ENCODE measurements at regions of chr13 and their contacts with region 1.

Region 1: DNA sequence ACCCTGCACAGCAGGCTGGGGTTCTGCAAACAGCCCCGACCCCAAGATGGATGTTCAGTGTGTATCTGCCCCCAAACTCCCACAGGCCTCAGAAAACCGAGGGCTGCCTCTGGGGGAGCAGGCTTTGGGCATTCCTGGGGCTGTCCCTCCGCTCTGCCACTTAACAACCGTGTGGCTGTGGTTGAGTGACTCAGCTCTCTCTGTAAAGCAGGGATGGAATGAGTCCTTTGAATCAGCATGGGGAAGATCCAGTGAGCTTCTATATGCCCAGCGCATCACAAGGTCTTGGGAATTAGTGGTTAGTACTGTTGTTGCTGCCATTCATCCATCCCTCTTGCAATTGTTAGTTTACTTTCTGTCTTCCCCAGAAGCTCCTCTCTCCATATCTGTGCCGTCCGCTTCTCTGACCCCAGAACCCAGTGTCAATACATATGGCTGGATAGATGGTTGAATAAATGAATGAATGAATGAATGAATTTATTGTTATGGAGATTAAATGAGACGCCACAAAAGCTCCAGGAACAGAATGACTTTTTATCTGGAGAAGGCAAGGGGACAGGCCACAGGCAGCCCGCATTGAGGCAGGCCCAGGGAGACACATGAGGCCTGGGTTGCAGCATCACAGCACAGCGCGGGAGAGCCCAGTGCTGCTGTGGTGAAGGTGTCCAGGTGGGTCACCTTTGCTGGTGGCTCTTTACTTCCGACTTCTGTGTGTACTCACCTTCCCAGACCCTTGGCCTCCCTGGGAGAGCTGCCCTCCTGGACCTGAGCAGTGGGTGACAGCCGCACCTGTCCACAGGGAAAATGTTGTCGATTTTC is 89.2 kb downstream of the RGCC start:
- DNase-seq: no peak
- ATAC-seq: no peak
- H3K4me3 ChIP-seq: no peak overlapping the region
- H3K27ac ChIP-seq: peak overlapping the region in 11 of 12 donors; percentile 62 to 90 (median 82)
- H3K4me1 ChIP-seq: peaks cover 3 to 25% (median 16%) of the 10 kb centered on the region in 12 donors
- H3K27me3 ChIP-seq: no peaks in the 10 kb centered on the region
- CTCF ChIP-seq: no peak
- POLR2A ChIP-seq: no peak

Region 2: GRCh38 chr13:41019011-41019487 is 527.5 kb before region 1 on chr13 and contains the start of gene ELF1:
- intact Hi-C with region 1: no loop called
- DNase-seq: peak in 2 of 5 donors; percentile 32 to 43
- ATAC-seq: peak; percentile 76 to 88 (median 86)
- H3K4me3 ChIP-seq: peak within 1 kb of the TSS in 9 of 12 donors; percentile 5 to 59 (median 25)
- H3K27ac ChIP-seq: peak within 1 kb of the TSS; percentile 25 to 93 (median 60)
- H3K4me1 ChIP-seq: peaks cover 0 to 74% (median 51%) of the 10 kb centered on the region in 12 donors
- H3K27me3 ChIP-seq: no peaks in the 10 kb centered on the region
- CTCF ChIP-seq: no peak
- POLR2A ChIP-seq: no peak
- total RNA-seq, gene ELF1: 28.6 to 75.4 (median 35.3) TPM

Region 3: GRCh38 chr13:41456768-41457588 is 89.6 kb before region 1 on chr13 and contains the start of gene RGCC:
- intact Hi-C with region 1: loop called in 2 of 10 experiments (anchors 5 to 10 kb)
- DNase-seq: peak; percentile 77 to 91 (median 83)
- ATAC-seq: peak; percentile 70 to 93 (median 88)
- H3K4me3 ChIP-seq: peak within 1 kb of the TSS; percentile 67 to 92 (median 76)
- H3K27ac ChIP-seq: peak within 1 kb of the TSS; percentile 73 to 93 (median 85)
- H3K4me1 ChIP-seq: peaks cover 0 to 41% (median 7%) of the 10 kb centered on the region in 12 donors
- H3K27me3 ChIP-seq: peaks cover 0 to 20% (median 8%) of the 10 kb centered on the region in 9 donors
- CTCF ChIP-seq: no peak
- POLR2A ChIP-seq: peak in 1 of 2 donors; percentile 95
- total RNA-seq, gene RGCC: 22.9 to 228 (median 45.9) TPM

Region 4: DNA sequence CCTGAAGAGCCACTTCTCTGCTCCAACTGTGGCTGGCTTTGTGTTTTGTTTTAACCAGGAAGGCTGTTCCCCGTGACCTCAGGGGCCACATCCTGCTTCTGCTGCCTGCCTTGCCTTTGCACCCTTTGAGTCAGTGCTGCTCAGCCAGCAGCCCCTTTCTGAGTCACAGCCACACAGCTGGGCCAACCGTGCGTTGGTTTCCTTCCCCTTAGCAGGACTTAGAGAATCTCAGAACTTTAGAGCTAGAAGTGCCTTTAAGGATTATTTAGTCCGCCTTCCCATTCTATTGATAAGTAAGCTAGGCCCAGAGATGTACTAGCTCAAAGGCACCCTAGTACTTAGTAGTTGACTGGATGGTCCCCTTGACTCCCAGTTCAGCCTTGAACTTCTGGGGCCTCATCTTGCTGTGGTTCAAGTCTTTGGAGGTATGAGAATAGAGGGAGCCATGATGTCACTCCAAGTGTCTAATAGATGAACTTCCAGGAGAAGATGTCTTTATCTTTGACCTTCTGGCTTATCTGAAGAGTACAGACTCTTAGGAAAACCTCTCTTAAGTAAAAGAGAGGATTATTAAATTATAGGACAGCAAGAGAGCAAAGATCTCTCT is 81.2 kb before region 1 on chr13:
- intact Hi-C with region 1: loop called in 1 of 10 experiments (anchors 10 kb)
- DNase-seq: peak; percentile 67 to 83 (median 71)
- ATAC-seq: peak; percentile 63 to 89 (median 80)
- H3K4me3 ChIP-seq: no peak overlapping the region
- H3K27ac ChIP-seq: peak overlapping the region; percentile 8 to 90 (median 71)
- H3K4me1 ChIP-seq: peaks cover 0 to 64% (median 25%) of the 10 kb centered on the region in 12 donors
- H3K27me3 ChIP-seq: no peaks in the 10 kb centered on the region
- CTCF ChIP-seq: no peak
- POLR2A ChIP-seq: no peak

Region 5: GRCh38 chr13:41492404-41493260 is 53.9 kb before region 1 on chr13:
- intact Hi-C with region 1: loop called in 2 of 10 experiments (anchors 5 kb)
- DNase-seq: no peak
- ATAC-seq: peak in 1 of 4 donors; percentile 9
- H3K4me3 ChIP-seq: no peak overlapping the region
- H3K27ac ChIP-seq: peak overlapping the region in 10 of 12 donors; percentile 16 to 86 (median 48)
- H3K4me1 ChIP-seq: peaks cover 5 to 54% (median 36%) of the 10 kb centered on the region in 12 donors
- H3K27me3 ChIP-seq: no peaks in the 10 kb centered on the region
- CTCF ChIP-seq: no peak
- POLR2A ChIP-seq: no peak

Region 6: DNA sequence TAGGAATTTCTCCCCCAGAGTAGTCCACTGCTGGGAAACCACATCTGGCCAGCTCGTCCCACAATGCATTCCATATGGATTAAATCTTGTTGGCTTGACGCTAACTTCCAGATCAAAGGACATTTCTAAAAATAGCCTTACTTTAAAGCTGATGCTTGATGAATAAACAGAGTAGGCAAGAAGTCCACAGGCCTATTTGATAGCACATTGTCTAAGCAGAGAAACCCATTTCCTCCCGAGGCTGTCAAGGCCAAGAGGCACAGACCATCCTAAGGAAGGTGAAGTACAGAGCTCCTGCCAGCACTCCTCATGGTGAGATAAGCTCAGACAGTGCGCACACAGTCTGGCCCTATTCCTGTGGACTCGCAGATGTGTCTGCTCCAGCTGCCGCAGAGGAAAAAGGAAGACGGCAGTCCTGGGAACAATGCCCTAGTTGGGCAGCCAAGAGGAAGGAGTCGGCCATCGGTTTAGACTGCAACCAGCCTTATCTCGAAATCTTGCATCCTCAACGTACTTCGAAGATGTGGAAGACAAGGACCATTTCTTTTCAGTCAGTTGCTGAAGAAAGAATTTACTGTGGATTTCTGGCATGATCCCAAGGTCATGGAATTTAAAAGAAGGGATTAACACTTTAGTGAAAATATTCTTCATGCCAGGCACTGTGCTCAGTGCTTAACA is 67.5 kb after region 1 on chr13:
- intact Hi-C with region 1: loop called in 2 of 10 experiments (anchors 5 kb)
- DNase-seq: peak; percentile 75 to 88 (median 80)
- ATAC-seq: peak; percentile 95 to 96 (median 96)
- H3K4me3 ChIP-seq: no peak overlapping the region
- H3K27ac ChIP-seq: peak overlapping the region; percentile 64 to 94 (median 74)
- H3K4me1 ChIP-seq: peaks cover 10 to 48% (median 34%) of the 10 kb centered on the region in 12 donors
- H3K27me3 ChIP-seq: no peaks in the 10 kb centered on the region
- CTCF ChIP-seq: no peak
- POLR2A ChIP-seq: no peak

Region 7: DNA sequence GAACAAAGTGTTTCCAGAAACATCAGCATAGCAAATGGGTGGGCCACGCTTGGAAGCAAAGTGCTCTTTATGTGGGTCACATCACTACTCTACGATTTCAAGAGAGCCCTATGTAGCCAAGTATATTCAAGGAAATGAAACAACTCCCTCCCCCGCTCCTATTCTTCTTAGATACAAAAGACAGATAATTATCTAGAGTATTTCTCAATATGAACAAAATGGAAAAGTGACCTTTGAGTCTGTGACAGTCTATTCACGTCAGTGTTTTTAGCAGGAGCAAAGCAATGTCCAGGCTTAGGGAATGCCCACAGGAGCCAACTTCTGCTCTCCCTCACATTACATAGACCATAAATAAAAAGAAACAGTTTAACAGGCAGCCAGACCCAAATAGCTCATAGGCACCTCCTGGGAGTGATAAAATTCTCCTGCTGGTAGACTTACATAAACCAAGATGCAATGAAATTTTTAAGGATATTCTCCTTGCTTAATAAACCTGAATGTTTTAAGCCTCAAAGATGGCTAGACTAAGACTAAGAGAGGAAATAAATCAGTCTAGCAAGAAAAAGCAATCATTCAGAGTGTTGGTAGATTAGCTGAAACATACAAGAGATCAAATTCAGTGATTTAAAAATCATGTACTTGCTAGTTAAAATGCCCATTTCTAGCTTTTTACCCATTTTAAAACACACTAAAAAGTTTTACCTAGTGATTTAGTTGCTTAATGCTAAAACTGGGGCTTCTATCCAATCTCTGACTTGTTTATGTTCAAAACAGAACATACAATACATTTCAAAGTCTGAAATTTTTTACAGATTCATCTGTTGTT is 93.6 kb after region 1 on chr13:
- intact Hi-C with region 1: loop called in 1 of 10 experiments (anchors 5 kb)
- DNase-seq: peak in 1 of 5 donors; percentile 37
- ATAC-seq: peak; percentile 82 to 94 (median 88)
- H3K4me3 ChIP-seq: no peak overlapping the region
- H3K27ac ChIP-seq: peak overlapping the region; percentile 43 to 79 (median 72)
- H3K4me1 ChIP-seq: peaks cover 0 to 42% (median 28%) of the 10 kb centered on the region in 12 donors
- H3K27me3 ChIP-seq: no peaks in the 10 kb centered on the region
- CTCF ChIP-seq: no peak
- POLR2A ChIP-seq: peak in 1 of 2 donors; percentile 27

Measured in heart left ventricle (tissue), 16 donors.